ENCODE measurements at regions of chr19 and their contacts with region 1.

Region 1: DNA sequence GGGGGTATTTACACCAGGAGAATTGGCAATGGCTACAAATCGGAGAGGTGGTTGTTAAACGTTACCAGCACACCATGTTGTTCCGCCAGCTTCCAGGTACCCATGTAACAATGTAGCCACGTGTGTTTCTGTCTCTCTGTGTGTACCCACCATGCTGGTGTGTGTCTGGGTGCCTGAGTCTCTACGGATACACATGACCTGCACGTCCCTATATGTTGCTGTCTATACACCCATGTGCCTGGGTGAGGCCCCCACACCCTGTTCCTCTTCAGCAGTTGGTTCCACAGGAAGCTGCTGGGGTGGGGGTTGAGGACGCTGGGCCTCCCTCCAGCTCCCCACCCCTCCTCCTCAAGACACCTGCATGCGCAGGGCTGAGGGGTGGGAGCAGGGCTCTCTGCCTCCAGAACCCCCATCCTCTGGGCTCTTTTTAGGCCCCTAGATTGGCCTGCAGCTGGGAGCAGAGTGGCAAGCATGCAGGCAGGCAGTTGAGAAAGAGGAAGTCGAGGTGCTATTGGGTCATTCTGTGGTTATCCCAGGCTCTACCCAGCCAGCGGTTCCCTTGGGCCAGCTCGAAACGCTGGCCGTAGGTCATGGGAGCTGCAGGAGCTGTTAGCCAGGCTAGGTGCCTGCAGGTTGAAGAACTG is at the start of gene ARHGEF18:
- DNase-seq: no peak
- H3K4me3 ChIP-seq: no peak within 1 kb of the TSS
- H3K27ac ChIP-seq: no peak within 1 kb of the TSS
- H3K4me1 ChIP-seq: no peaks in the 10 kb centered on the region
- H3K27me3 ChIP-seq: no peaks in the 10 kb centered on the region; a peak in 1 of 7 replicates
- CTCF ChIP-seq: no peak
- EP300 ChIP-seq: no peak
- POLR2A ChIP-seq: no peak
- RAD21 ChIP-seq: no peak
- total RNA-seq, gene ARHGEF18: 35.9 and 36.8 TPM in 2 replicates

Region 2: DNA sequence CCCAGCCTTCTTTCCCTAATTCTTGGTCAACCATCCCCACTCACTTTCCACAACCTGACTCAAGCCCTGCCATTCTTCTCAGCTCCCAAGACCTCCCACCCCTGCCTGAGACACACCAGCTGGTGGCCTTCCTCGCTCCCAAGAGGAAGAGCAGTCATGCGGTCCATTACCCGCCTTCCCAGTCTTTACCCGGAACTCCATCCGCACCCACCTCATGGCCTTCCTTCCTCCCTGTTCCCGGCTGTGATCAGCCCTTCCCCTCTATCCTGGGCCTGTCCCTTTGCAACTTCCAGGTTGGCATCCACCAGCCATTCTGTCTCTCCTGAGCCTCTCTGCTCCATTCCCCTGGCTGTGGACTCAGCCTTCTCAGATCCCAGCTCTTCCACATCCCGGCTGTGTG is 35.9 kb before region 1 on chr19:
- CTCF ChIA-PET with region 1: no interaction called
- POLR2A ChIA-PET with region 1: no interaction called
- DNase-seq: no peak
- H3K4me3 ChIP-seq: no peak overlapping the region
- H3K27ac ChIP-seq: no peak overlapping the region
- H3K4me1 ChIP-seq: no peaks in the 10 kb centered on the region
- H3K27me3 ChIP-seq: no peaks in the 10 kb centered on the region
- CTCF ChIP-seq: no peak
- EP300 ChIP-seq: no peak
- POLR2A ChIP-seq: no peak
- RAD21 ChIP-seq: no peak

Region 3: DNA sequence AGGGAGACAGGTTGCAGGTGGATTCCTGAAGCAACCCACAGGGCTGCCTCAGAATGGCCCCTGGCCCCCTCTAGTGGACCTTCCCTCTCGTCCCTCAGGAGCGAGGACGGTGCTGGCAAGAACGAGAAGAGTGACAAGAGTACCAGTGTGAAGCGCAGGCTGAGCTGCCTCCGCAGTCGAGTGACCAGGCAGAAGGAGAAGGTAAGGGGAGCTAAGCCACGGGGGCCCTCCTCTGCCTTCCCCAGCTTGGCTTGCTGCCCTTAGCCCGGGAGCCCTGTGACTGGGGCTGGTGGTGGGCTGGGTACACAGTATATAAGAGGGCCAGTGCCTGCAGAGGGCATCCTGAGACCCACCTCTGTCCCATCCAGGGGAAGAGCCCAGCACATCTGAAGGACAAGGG is 34.0 kb after region 1 on chr19:
- CTCF ChIA-PET with region 1: interaction called, 85 read pairs
- POLR2A ChIA-PET with region 1: no interaction called
- DNase-seq: peak in 1 of 2 experiments; percentile 50
- H3K4me3 ChIP-seq: no peak overlapping the region
- H3K27ac ChIP-seq: no peak overlapping the region
- H3K4me1 ChIP-seq: 0 out of 7 replicates have a peak, but pooled peaks cover 0 to 2% (median 0%) of the 10 kb centered on the region in 4 experiments
- H3K27me3 ChIP-seq: no peaks in the 10 kb centered on the region
- CTCF ChIP-seq: peak; percentile 16 to 45 (median 38); a peak in 3 of 4 replicates
- EP300 ChIP-seq: no peak
- POLR2A ChIP-seq: no peak
- RAD21 ChIP-seq: no peak; a peak in 1 of 4 replicates